ENCODE measurements at regions of chr17 and their contacts with region 1.

Region 1: GRCh38 chr17:18017958-18018357 is 21.0 kb downstream of the ATPAF2 start:
- DNase-seq: no peak
- H3K4me3 ChIP-seq: no peak overlapping the region
- H3K27ac ChIP-seq: no peak overlapping the region
- H3K4me1 ChIP-seq: peaks cover 5% of the 10 kb centered on the region
- H3K27me3 ChIP-seq: no peaks in the 10 kb centered on the region
- CTCF ChIP-seq: no peak
- EP300 ChIP-seq: no peak
- POLR2A ChIP-seq: no peak

Region 2: DNA sequence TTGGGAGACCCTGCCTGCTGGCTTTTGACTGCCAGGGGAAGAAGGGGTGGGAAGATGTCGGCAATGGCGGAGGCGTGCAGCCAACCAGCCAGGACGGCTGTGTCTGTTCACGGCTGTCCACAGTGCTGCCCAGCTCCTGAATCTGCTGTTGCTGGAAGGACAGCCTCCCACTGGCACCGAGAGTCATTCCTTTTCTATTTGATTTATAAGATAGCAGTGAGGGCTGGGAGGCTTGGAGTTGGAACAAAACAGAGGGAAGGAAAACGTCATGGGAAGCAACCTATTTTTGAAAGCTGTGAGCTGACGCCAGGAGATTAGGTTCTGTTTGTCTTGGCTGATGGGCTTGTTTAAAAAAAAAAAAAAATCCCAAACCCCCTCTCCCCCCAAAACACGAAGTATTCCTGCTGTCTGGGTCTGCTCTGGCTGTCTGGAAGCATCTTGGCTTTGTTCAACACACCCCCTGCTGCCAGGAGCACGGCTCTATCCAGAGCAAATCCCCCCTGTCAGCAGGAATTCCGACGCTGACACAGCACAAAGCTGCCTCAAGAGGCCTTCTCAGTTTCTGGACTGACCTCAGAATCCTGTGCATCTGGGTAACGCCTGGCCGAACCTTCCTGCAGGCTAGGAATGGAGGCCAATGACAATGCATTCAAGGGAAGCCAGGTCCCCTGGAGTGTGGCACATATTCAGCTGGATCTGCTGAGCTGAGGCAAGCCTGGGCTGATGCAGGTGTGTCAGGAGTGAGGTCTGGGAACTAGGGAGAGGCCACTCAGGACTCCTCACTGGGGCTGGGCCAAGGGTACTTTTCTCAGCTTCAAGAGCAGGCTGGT is 140.2 kb before region 1 on chr17:
- intact Hi-C with region 1: loop called in 2 of 4 experiments (anchors 10 kb)
- DNase-seq: peak; percentile 77 to 89 (median 86)
- H3K4me3 ChIP-seq: no peak overlapping the region
- H3K27ac ChIP-seq: peak overlapping the region; percentile 58 to 88
- H3K4me1 ChIP-seq: peaks cover 21% of the 10 kb centered on the region
- H3K27me3 ChIP-seq: no peaks in the 10 kb centered on the region
- CTCF ChIP-seq: no peak
- EP300 ChIP-seq: no peak
- POLR2A ChIP-seq: no peak

Measured in ovary (tissue), 10 donors.